GM12878 (cell line): ENCODE measurements at regions of chr7 and their contacts with region 1.

Region 1: DNA sequence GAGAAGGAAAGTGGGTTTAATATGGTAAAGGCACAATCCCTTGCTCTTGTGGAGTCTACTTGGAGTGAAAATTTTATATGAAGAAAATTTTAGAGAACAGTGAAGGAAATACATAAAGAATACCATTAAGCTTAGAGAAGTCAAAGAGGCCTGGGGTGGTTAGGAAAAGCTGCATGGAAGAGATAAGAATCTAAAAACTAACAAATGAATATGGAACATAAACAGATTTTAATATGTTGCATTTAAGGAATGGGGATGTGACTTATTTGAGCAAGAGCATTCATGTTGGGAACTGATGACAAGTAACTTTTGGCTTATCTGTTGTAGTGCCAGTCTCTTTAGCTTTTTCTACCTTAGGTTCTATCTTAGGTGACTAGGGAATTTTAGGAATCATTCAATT is 31.0 kb downstream of the AHR start:
- DNase-seq: no peak
- ATAC-seq: no peak
- H3K4me3 ChIP-seq: no peak overlapping the region
- H3K27ac ChIP-seq: no peak overlapping the region
- H3K4me1 ChIP-seq: no peaks in the 10 kb centered on the region
- H3K27me3 ChIP-seq: no peaks in the 10 kb centered on the region
- CTCF ChIP-seq: no peak
- EP300 ChIP-seq: no peak
- POLR2A ChIP-seq: no peak
- RAD21 ChIP-seq: no peak

Region 2: DNA sequence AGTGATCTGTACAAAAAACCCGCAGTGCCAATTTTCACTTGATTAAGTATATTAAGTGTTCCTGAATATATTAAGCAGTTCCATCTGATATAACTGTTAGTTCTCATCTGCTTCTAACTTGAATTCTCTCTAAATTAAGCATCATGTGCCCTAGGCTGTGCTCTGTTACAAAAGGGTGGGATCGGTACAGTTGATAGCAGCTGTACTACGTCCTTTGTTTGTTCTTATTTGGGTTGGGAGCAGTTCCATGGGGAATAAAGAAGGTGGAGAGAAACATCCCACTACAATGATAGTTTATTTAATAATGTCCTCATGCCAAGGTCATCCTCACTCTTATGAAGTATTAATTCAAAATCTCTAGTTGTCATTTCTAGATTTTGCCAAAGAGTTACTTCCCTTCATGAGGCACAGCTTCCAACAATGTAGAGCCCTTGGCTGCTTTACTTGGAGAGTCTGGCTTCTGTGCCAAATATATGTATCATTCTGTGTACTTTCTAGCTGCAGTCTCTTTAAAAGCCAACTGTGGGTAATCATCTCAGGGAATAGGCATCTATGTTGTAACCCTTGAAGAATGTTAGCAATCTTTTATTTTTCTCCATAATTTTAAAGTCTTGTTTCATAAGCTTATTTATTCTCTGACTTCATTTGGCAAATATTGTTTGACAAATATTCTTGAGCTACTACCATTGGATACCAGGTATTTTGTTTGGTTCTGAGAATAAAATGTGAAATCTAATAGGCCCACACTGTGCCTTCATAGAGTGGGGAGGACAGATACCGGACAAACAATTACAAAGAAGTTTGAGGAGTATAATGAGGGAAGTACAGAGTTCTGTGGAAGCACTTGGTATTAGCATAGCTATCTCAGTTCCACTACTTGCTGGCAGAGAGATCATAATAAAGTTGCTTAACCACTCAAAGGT is 53.4 kb before region 1 on chr7:
- CTCF ChIA-PET with region 1: no interaction called
- POLR2A ChIA-PET with region 1: no interaction called
- RAD21 ChIA-PET with region 1: no interaction called
- SMC1A ChIA-PET with region 1: no interaction called
- in situ Hi-C with region 1: no loop called
- intact Hi-C with region 1: no loop called
- DNase-seq: no peak
- ATAC-seq: no peak
- H3K4me3 ChIP-seq: no peak overlapping the region
- H3K27ac ChIP-seq: no peak overlapping the region
- H3K4me1 ChIP-seq: no peaks in the 10 kb centered on the region
- H3K27me3 ChIP-seq: no peaks in the 10 kb centered on the region
- CTCF ChIP-seq: no peak
- EP300 ChIP-seq: no peak
- POLR2A ChIP-seq: no peak
- RAD21 ChIP-seq: no peak

Region 3: DNA sequence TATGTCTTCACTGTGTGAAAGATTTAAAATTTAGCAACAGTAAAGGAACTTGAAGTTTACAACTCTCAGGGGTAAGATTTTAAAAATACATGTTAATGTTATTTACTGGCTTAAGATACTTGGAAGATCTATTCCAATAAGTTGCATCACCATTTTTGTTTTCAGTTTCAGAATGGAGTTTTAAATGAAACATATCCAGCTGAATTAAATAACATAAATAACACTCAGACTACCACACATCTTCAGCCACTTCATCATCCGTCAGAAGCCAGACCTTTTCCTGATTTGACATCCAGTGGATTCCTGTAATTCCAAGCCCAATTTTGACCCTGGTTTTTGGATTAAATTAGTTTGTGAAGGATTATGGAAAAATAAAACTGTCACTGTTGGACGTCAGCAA is 13.3 kb after region 1 on chr7:
- CTCF ChIA-PET with region 1: interaction called, 6 read pairs
- POLR2A ChIA-PET with region 1: no interaction called
- RAD21 ChIA-PET with region 1: no interaction called
- SMC1A ChIA-PET with region 1: interaction called, 11 read pairs
- in situ Hi-C with region 1: no loop called
- intact Hi-C with region 1: no loop called
- DNase-seq: no peak
- ATAC-seq: no peak
- H3K4me3 ChIP-seq: no peak overlapping the region
- H3K27ac ChIP-seq: no peak overlapping the region
- H3K4me1 ChIP-seq: no peaks in the 10 kb centered on the region
- H3K27me3 ChIP-seq: no peaks in the 10 kb centered on the region
- CTCF ChIP-seq: no peak
- EP300 ChIP-seq: no peak
- POLR2A ChIP-seq: no peak
- RAD21 ChIP-seq: no peak